ENCODE measurements at regions of chr1 and their contacts with region 1.

Region 1: GRCh38 chr1:2381741-2382620 is 9.4 kb downstream of the MORN1 start:
- DNase-seq: peak; percentile 89
- ATAC-seq: peak; percentile 95 to 96

Region 2: GRCh38 chr1:2194898-2195673 is 186.9 kb before region 1 on chr1:
- intact Hi-C with region 1: loop called (anchors 1 to 2 kb)
- DNase-seq: peak; percentile 94
- ATAC-seq: peak; percentile 76 to 77

Region 3: GRCh38 chr1:2611031-2611501 is 229.1 kb after region 1 on chr1:
- intact Hi-C with region 1: no loop called
- DNase-seq: no peak
- ATAC-seq: peak; percentile 23 to 54